ENCODE measurements at regions of chr17 and their contacts with region 1.

Region 1: DNA sequence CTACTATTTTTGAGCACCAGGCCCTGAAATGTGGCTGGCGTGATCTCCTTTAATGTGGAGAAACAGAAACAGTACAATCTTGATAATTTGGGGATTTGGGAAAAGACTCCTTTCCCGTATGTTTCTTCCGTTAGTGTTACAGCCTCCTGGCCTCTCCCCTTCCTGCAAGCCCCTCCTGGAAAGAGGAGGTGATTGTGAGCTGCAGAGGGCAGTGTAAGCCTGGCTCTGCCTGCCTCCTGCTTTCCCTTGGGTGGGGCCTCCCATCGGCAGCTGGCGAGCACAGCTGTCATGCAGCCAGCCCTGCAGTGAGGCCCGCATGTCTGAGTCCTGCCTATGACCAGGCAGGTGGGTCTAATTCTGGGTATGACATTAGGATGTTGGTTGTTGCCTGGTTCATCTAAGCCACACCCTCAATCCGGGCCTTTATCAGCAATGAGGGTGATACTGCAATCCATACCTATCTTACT is 48.7 kb upstream of the WSB1 start:
- ATAC-seq: peak; percentile 85 to 100 (median 98)
- H3K4me3 ChIP-seq: no peak overlapping the region
- H3K27ac ChIP-seq: no peak overlapping the region
- H3K4me1 ChIP-seq: peaks cover 6 to 10% of the 10 kb centered on the region in 2 donors

Region 2: DNA sequence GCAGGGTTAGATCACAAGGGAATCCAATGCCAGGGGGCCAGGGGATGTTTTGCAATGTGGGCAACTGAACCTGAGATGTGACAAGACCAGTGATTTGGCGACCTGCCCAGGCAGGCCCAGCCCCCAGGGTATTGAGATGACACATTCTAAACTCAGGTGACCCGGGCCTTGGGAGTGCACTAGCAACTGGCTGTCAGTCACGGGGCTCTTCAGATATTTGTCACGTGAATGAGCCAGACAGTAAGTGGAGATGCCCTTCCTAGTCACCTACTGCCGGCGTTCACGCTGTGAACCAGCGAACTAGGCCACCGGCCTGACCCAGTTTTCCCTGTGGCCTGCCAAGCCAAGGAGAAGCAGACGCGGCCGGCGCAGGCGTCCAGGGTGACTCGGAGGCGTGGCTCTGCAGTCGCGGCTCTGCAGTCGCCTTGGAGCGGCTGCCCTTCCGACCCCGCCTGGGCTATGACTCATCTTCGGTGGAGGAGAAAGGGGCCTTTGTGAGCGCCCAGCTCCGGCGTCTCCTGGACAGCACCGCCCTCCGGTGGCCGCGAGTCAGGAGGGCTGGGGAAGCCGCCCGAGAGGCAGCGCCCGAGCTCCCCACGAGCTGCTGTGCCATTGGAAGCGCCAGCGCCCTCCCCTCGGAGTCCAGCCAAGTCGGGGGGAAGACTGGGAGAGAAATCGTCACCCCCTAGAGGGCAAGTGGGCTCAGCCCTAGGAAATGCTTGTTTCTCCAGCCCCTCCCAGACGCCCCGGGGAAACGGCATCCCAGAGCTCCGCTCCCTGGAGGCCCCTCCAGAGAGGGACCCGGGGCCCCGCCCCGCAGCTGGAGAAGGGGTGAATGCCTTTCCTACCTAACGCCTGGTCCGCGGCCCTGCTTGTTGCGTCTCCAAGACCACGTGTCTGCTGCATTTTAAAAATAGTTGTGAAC is 87.5 kb after region 1 on chr17:
- in situ Hi-C with region 1: loop called in 2 of 9 experiments (anchors 10 to 25 kb)
- ATAC-seq: peak; percentile 87 to 97 (median 90)
- H3K4me3 ChIP-seq: peak overlapping the region; percentile 20 to 40 (median 27)
- H3K27ac ChIP-seq: peak overlapping the region; percentile 78 to 89
- H3K4me1 ChIP-seq: peaks cover 11 to 21% of the 10 kb centered on the region in 2 donors

Region 3: DNA sequence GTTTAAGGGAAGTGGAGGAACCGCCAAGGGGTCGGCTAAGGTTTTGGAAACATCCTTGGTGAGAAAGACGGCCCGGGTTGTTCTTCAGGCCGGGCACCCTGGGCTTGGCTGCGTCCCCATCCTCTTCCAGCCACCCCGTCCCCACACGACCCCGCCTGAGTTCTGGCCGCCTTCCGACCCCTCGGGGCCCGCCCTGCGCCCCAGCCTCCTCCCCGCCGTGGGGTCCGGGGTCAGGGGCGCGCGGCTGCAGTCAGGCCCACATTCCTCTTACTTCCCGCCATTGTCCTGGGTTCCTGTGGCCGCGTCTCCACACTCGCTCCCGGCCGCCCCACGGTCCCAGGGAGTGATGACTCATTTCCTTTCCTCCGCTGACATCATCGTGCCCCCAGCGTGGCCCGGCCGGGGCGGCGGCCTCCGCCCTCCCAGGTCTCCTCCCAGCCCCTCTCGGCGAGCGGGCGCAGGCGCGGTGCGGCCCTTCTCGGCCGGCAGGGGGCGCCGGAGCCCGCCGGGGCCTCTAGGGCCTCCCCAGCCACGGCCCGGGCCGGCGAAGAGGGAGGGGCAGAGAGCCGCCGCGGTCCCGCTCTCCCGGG is 108.3 kb after region 1 on chr17:
- in situ Hi-C with region 1: loop called in 2 of 9 experiments (anchors 25 kb)
- ATAC-seq: peak; percentile 82 to 97 (median 94)
- H3K4me3 ChIP-seq: peak overlapping the region; percentile 37 to 57 (median 50)
- H3K27ac ChIP-seq: peak overlapping the region; percentile 83 to 92
- H3K4me1 ChIP-seq: peaks cover 7 to 9% of the 10 kb centered on the region in 2 donors

Region 4: DNA sequence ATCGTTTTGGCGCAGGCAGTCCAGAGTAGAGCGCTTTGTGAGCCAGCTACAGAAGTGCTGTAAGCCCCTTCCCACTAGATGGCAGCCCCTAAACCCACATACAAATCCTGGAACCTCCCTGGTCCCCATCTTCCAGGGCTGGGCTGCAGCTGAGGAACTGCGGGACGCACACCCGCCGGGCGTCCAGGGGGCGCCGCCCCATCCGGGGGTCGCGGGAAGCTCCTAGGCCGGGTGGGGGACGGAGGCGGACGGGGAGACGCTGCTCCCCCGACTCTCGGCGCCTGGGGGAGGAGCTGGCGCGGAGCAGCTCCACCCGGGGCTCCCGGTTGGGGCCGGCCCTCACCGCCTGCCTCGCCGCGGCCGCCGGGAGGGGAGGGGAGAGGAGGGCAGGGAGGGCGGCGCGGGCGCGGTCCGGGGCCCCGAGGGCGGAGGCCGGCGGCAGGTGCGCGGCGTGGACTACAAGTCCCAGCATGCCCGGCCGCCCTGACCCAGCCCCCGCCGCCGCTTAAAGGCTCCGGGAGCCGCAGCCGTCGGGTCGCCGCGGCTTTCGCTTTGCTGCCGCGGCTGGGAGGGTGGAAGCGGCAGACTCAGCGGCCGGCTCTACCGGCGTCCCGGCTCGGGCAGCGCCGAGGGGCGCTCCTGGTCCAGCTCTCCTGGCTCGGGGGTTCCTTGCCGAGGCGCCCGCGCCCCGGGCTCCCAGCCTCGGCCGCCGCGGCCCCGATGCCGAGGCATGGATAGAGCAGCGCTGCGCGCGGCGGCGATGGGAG is 210.8 kb after region 1 on chr17 and contains the start of gene KSR1:
- in situ Hi-C with region 1: loop called in 1 of 9 experiments (anchors 25 kb)
- ATAC-seq: peak; percentile 87 to 94 (median 91)
- H3K4me3 ChIP-seq: peak within 1 kb of the TSS; percentile 84 to 95 (median 92)
- H3K27ac ChIP-seq: peak within 1 kb of the TSS; percentile 77 to 87
- H3K4me1 ChIP-seq: peaks cover 16 to 21% of the 10 kb centered on the region in 2 donors
- total RNA-seq, gene KSR1: 11.2 to 34.1 (median 17.6) TPM

Region 5: DNA sequence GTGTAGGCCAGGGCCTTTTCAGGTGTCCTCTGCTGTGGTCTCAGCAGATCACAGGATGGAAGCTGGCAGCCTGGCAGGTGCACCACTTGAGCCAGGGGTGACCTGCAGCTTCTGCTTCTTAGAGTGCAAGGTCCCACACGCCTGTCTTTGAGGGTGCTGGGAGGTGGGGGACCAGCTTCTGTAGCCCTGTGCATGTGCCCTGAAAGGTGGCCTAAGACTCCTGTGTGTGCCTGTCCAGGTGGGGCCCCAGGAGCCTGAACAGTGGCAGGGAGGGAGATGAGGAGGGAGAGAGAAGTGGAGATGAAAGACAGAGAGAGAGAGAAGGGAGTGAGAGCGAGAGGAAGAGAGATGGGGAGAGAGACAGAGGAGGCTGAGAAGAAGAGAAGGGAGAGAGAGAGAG is 431.9 kb after region 1 on chr17:
- in situ Hi-C with region 1: loop called in 1 of 9 experiments (anchors 25 kb)
- ATAC-seq: no peak
- H3K4me3 ChIP-seq: no peak overlapping the region
- H3K27ac ChIP-seq: no peak overlapping the region
- H3K4me1 ChIP-seq: no peaks in the 10 kb centered on the region

Region 6: DNA sequence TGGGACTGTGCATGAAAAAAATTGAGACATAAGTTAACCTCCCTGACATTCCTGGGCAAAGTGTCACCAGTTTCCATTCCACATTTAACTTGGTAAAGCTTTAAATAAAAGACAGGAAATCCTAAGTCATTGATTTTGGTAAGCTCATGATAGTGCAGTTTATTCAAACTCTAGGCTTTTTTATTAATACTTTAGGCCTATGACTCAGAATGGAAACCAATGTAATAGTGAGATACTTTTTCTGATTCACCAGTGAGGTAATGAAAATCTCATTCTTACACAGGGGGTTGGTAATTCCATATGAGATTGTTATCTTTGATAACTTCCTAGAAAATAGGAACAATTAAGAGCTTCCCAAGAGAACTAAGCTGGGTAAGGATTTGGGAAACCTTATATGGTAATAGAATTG is 888.3 kb after region 1 on chr17:
- in situ Hi-C with region 1: no loop called
- ATAC-seq: peak in 2 of 8 experiments; percentile 31 to 60
- H3K4me3 ChIP-seq: no peak overlapping the region
- H3K27ac ChIP-seq: no peak overlapping the region
- H3K4me1 ChIP-seq: no peaks in the 10 kb centered on the region

Measured in motor neuron (in vitro differentiated cells).